HepG2 (cell line): ENCODE measurements at regions of chr3 and their contacts with region 1.

Region 1: GRCh38 chr3:191356611-191357439 is 26.5 kb upstream of the UTS2B start:
- DNase-seq: no peak
- ATAC-seq: no peak
- H3K4me3 ChIP-seq: no peak overlapping the region
- H3K27ac ChIP-seq: no peak overlapping the region
- H3K4me1 ChIP-seq: peaks cover 43% of the 10 kb centered on the region
- H3K27me3 ChIP-seq: no peaks in the 10 kb centered on the region
- CTCF ChIP-seq: no peak
- EP300 ChIP-seq: no peak
- POLR2A ChIP-seq: no peak
- RAD21 ChIP-seq: no peak

Region 2: DNA sequence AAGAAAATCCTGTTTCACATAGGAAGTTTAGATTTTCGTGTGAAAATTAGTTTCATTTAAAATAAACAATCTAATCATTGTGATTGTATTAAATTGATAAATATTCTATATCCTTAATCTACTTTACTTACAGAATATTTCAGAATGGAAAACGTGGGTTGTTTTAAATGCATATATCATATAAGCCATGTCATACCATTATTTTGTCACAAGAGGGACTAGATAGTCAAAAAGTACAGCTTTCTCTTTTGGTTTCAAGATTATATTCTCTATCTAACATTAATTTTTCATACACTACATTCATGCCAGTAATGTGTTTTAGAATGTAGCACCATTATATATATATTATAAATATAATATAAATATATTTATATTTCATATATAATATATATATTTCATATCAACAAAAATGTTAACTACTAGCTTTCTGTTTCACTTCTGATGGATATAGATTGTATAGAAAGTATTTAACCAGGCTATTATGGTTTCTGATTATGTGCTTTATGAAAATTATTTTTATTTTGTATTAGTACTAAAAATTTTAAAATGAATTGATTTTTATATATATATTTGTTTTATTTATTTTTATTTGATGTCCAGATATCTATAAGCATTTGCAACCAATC is 112.5 kb before region 1 on chr3:
- CTCF ChIA-PET with region 1: no interaction called
- POLR2A ChIA-PET with region 1: no interaction called
- in situ Hi-C with region 1: no loop called
- intact Hi-C with region 1: loop called (anchors 10 kb)
- DNase-seq: peak; percentile 6
- ATAC-seq: no peak
- H3K4me3 ChIP-seq: no peak overlapping the region
- H3K27ac ChIP-seq: no peak overlapping the region
- H3K4me1 ChIP-seq: no peaks in the 10 kb centered on the region
- H3K27me3 ChIP-seq: no peaks in the 10 kb centered on the region; a peak in 1 of 5 replicates
- CTCF ChIP-seq: peak; percentile 15; the same call in 1 of the 2 replicates
- EP300 ChIP-seq: no peak
- POLR2A ChIP-seq: no peak
- RAD21 ChIP-seq: no peak

Region 3: DNA sequence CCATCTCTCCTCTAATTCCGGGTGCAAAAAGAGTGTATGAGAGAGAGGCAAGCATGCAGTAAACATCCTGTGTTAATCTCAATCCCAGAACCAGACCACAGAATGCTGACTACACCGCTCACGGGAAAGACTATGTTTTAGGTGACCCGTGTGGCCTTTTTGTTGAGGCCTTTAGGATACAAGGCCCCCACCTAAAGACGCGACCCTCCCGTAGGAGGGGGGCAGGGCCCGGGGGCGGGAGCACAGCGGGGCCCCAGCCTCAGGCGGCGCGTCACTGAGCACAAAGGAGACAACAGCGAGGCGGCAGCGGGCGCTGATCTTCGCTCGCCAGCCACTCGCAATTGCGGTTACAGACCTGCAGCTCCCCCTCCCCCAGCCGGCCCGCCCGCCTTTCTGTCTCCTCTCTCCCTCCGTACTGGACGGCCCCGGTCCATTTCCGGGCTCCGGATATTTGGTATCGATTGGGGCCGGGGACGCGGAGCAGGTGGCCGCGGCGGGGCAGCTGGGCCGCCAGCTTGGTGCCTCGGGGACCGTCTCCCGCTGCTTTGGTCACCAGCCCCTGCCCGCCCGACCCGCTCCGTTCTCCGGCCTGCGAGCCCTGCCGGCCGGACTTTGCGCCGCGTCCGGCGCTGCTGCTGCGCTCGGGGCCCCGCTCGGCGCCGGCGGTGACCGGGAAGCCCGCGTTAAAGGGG is 27.7 kb before region 1 on chr3 and contains the start of gene CCDC50:
- CTCF ChIA-PET with region 1: no interaction called
- POLR2A ChIA-PET with region 1: interaction called, 9 read pairs
- in situ Hi-C with region 1: no loop called
- intact Hi-C with region 1: loop called (anchors 1 kb)
- DNase-seq: peak; percentile 77
- ATAC-seq: peak; percentile 89
- H3K4me3 ChIP-seq: peak within 1 kb of the TSS; percentile 70 to 89 (median 88)
- H3K27ac ChIP-seq: peak within 1 kb of the TSS; percentile 95
- H3K4me1 ChIP-seq: peaks cover 47% of the 10 kb centered on the region
- H3K27me3 ChIP-seq: no peaks in the 10 kb centered on the region
- CTCF ChIP-seq: peak; percentile 40
- EP300 ChIP-seq: peak in 1 of 2 experiments; percentile 69; a peak in 2 of 4 replicates
- POLR2A ChIP-seq: peak; percentile 73 to 80
- RAD21 ChIP-seq: peak; percentile 56
- total RNA-seq, gene CCDC50: 66.4 and 84.6 TPM in 2 replicates

Region 4: GRCh38 chr3:191336833-191337232 is 20.0 kb before region 1 on chr3:
- CTCF ChIA-PET with region 1: no interaction called
- POLR2A ChIA-PET with region 1: no interaction called
- in situ Hi-C with region 1: no loop called
- intact Hi-C with region 1: loop called (anchors 2 kb)
- DNase-seq: no peak
- ATAC-seq: no peak
- H3K4me3 ChIP-seq: no peak overlapping the region
- H3K27ac ChIP-seq: no peak overlapping the region
- H3K4me1 ChIP-seq: peaks cover 96% of the 10 kb centered on the region
- H3K27me3 ChIP-seq: no peaks in the 10 kb centered on the region
- CTCF ChIP-seq: no peak
- EP300 ChIP-seq: no peak
- POLR2A ChIP-seq: no peak
- RAD21 ChIP-seq: no peak